MCF 10A (cell line): ENCODE measurements at regions of chr3 and their contacts with region 1.

Region 1: GRCh38 chr3:177179281-177180067 is 17.8 kb downstream of the TBL1XR1 start:
- DNase-seq: peak; percentile 11
- H3K4me3 Mint-ChIP-seq: no peak overlapping the region
- H3K27ac Mint-ChIP-seq: no peak overlapping the region
- H3K4me1 Mint-ChIP-seq: peaks cover 35% of the 10 kb centered on the region
- H3K27me3 Mint-ChIP-seq: no peaks in the 10 kb centered on the region
- CTCF ChIP-seq: no peak

Region 2: GRCh38 chr3:177157492-177157891 is 22.0 kb before region 1 on chr3:
- CTCF ChIA-PET with region 1: interaction called, 16 read pairs
- POLR2A ChIA-PET with region 1: interaction called, 13 read pairs
- intact Hi-C with region 1: no loop called
- DNase-seq: no peak
- H3K4me3 Mint-ChIP-seq: no peak overlapping the region
- H3K27ac Mint-ChIP-seq: no peak overlapping the region
- H3K4me1 Mint-ChIP-seq: peaks cover 7% of the 10 kb centered on the region
- H3K27me3 Mint-ChIP-seq: no peaks in the 10 kb centered on the region
- CTCF ChIP-seq: no peak

Region 3: DNA sequence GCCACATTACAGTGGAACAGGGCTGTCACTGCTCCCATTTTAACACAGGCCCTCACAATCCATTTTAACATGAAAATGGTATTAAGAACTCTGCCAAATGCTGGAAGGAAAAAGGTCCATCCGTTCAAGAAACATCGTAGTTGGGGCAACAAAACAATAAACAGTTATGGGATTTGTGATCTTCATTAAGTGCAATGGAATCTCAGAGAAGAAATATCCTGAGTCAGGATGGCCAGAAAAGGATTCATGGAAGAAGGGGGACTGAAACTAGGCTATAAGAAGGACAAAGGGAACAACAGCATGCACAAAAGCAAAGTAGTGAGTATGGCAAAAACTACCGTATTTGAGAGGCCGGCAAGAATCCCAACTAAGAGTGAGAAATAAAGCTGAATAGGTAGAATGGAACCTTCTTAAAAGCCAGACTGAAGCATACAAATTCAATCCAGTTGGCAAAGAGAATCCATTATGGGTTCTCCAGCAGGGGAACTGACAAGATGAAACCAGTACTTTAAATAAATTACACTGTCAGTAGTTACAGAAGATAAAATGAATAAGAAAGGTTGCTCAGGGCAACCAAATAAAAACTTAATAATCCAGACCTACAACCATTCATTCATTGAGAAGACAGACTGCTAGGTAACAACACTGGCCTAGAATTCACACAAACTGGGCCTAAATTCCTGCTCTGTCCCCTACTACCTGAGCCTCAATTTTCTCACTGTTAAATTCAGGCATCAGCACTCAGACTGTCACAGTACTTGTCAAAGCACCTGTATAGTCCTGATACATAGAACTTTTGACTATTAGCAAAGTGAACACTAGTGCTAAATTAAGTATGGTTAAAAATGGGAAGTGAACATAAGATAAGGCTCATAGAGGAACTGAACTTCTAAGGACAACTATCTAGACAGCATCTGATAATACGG is 11.5 kb after region 1 on chr3:
- CTCF ChIA-PET with region 1: interaction called, 7 read pairs
- POLR2A ChIA-PET with region 1: interaction called, 21 read pairs
- intact Hi-C with region 1: no loop called
- DNase-seq: no peak
- H3K4me3 Mint-ChIP-seq: no peak overlapping the region
- H3K27ac Mint-ChIP-seq: peak overlapping the region; percentile 39
- H3K4me1 Mint-ChIP-seq: peaks cover 34% of the 10 kb centered on the region
- H3K27me3 Mint-ChIP-seq: no peaks in the 10 kb centered on the region
- CTCF ChIP-seq: no peak

Region 4: GRCh38 chr3:177251755-177252154 is 72.3 kb after region 1 on chr3:
- CTCF ChIA-PET with region 1: no interaction called
- POLR2A ChIA-PET with region 1: no interaction called
- intact Hi-C with region 1: no loop called
- DNase-seq: peak; percentile 24
- H3K4me3 Mint-ChIP-seq: no peak overlapping the region
- H3K27ac Mint-ChIP-seq: no peak overlapping the region
- H3K4me1 Mint-ChIP-seq: no peaks in the 10 kb centered on the region
- H3K27me3 Mint-ChIP-seq: no peaks in the 10 kb centered on the region
- CTCF ChIP-seq: no peak